Heart right ventricle (tissue), 16 donors: ENCODE measurements at regions of chr20 and their contacts with region 1.

Region 1: DNA sequence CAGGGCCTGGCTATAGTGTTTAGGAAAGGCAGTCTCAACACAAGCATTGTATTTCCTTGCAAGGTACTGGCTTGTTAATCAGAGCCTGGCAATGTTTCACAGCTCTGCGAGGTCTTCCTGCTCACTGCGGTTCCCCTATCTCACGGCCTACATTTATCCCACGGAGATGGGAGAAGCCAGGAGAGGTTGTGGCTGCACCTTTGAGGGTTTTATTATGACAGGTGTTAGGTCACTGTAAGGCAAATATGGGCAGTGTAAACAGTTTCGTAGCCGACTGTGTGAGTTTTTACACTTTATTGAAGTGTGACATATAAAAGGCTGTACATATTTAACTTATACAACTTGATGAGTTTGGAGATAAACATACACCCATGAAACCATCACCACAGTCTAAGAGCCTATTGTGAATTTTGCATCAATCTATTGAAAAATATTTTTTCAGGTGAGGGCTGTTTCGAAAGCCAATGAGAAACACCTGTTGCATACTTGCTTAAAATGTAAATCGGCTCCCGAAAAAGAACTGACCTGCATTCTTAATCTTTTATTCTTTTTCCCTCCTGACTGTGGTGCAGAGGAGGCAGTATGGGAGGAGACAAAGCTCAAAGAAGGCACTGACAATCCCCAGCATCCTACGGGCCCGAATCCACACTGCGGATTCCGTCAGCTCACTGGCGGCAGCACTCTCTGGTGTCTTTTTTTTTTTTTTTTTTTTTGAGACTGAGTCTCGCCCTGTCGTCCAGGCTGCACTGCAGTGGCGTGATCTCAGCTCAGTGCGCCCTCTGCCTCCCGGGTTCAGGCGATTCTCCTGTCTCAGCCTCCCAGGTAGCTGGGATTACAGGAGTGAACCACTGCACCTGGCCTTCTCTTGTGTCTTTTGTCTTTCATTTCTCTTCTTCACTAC is 7.5 kb upstream of the RBM38 start:
- DNase-seq: no peak
- ATAC-seq: no peak
- H3K4me3 ChIP-seq: no peak overlapping the region
- H3K27ac ChIP-seq: no peak overlapping the region
- H3K4me1 ChIP-seq: peaks cover 7 to 20% (median 14%) of the 10 kb centered on the region in 9 donors
- H3K27me3 ChIP-seq: no peaks in the 10 kb centered on the region
- CTCF ChIP-seq: no peak

Region 2: GRCh38 chr20:57493091-57493615 is 109.5 kb after region 1 on chr20:
- intact Hi-C with region 1: loop called (anchors 1 to 5 kb)
- DNase-seq: no peak
- ATAC-seq: peak in 1 of 8 donors; percentile 19
- H3K4me3 ChIP-seq: no peak overlapping the region
- H3K27ac ChIP-seq: no peak overlapping the region
- H3K4me1 ChIP-seq: peaks cover 0 to 14% (median 11%) of the 10 kb centered on the region in 9 donors
- H3K27me3 ChIP-seq: peaks cover 0 to 23% (median 0%) of the 10 kb centered on the region in 7 donors
- CTCF ChIP-seq: no peak

Region 3: GRCh38 chr20:57498425-57499400 is 115.0 kb after region 1 on chr20:
- intact Hi-C with region 1: loop called (anchors 1 to 5 kb)
- DNase-seq: no peak
- ATAC-seq: peak in 3 of 8 donors; percentile 50 to 66 (median 53)
- H3K4me3 ChIP-seq: no peak overlapping the region
- H3K27ac ChIP-seq: no peak overlapping the region
- H3K4me1 ChIP-seq: peaks cover 0 to 38% (median 16%) of the 10 kb centered on the region in 9 donors
- H3K27me3 ChIP-seq: peaks cover 0 to 67% (median 4%) of the 10 kb centered on the region in 7 donors
- CTCF ChIP-seq: peak in 5 of 9 donors; percentile 22 to 41 (median 32)